B cell (primary cell): ENCODE measurements at regions of chr22 and their contacts with region 1.

Region 1: GRCh38 chr22:17115945-17116565 is 5.1 kb downstream of the TMEM121B start:
- DNase-seq: no peak
- ATAC-seq: no peak
- H3K4me3 ChIP-seq: no peak overlapping the region
- H3K4me3 Mint-ChIP-seq: no peak overlapping the region
- H3K27ac ChIP-seq: no peak overlapping the region
- H3K27ac Mint-ChIP-seq: no peak overlapping the region
- H3K4me1 ChIP-seq: peaks cover 24 to 33% of the 10 kb centered on the region in 2 donors
- H3K4me1 Mint-ChIP-seq: peaks cover 34% of the 10 kb centered on the region
- H3K27me3 ChIP-seq: peaks cover 0 to 17% (median 2%) of the 10 kb centered on the region in 4 experiments
- H3K27me3 Mint-ChIP-seq: peaks cover 16% of the 10 kb centered on the region
- CTCF ChIP-seq: no peak

Region 2: DNA sequence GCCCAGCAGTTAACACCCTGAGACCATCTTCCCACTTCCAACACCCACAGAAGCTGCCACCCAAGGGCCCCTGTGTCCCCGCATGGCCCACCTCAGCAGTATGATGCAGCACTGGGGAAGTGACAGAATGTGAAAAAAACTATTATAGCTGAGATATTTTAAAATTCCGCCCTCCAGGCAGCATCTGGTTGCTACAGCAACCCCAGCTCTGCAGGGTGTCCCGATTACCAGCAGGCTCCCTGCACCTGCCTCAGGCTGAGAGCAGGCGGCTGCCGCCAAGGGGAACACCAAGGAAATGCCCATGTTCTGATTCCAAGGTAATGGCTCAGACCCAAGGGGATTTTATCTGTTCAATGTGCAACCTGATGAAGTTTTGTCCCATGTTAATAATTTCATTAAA is 15.6 kb after region 1 on chr22:
- CTCF ChIA-PET with region 1: no interaction called
- POLR2A ChIA-PET with region 1: interaction called, 13 read pairs
- intact Hi-C with region 1: no loop called
- DNase-seq: no peak
- ATAC-seq: no peak
- H3K4me3 ChIP-seq: no peak overlapping the region
- H3K4me3 Mint-ChIP-seq: no peak overlapping the region
- H3K27ac ChIP-seq: no peak overlapping the region
- H3K27ac Mint-ChIP-seq: no peak overlapping the region
- H3K4me1 ChIP-seq: peaks cover 0 to 3% of the 10 kb centered on the region in 2 donors
- H3K4me1 Mint-ChIP-seq: peaks cover 3% of the 10 kb centered on the region
- H3K27me3 ChIP-seq: no peaks in the 10 kb centered on the region
- H3K27me3 Mint-ChIP-seq: no peaks in the 10 kb centered on the region
- CTCF ChIP-seq: no peak

Region 3: GRCh38 chr22:17922925-17923890 is 807.2 kb after region 1 on chr22:
- CTCF ChIA-PET with region 1: no interaction called
- POLR2A ChIA-PET with region 1: no interaction called
- intact Hi-C with region 1: no loop called
- DNase-seq: no peak
- ATAC-seq: no peak
- H3K4me3 ChIP-seq: no peak overlapping the region
- H3K4me3 Mint-ChIP-seq: no peak overlapping the region
- H3K27ac ChIP-seq: peak overlapping the region in 1 of 2 donors; percentile 47
- H3K27ac Mint-ChIP-seq: peak overlapping the region; percentile 59
- H3K4me1 ChIP-seq: peaks cover 86 to 94% of the 10 kb centered on the region in 2 donors
- H3K4me1 Mint-ChIP-seq: peaks cover 27% of the 10 kb centered on the region
- H3K27me3 ChIP-seq: no peaks in the 10 kb centered on the region
- H3K27me3 Mint-ChIP-seq: no peaks in the 10 kb centered on the region
- CTCF ChIP-seq: no peak